OCI-LY7 (cell line): ENCODE measurements at regions of chr17 and their contacts with region 1.

Region 1: GRCh38 chr17:69581061-69581961 is 166.8 kb downstream of the MAP2K6 start:
- DNase-seq: peak; percentile 100
- H3K4me3 ChIP-seq: peak overlapping the region; percentile 47
- H3K27ac ChIP-seq: peak overlapping the region; percentile 94
- H3K4me1 ChIP-seq: peaks cover 93% of the 10 kb centered on the region
- CTCF ChIP-seq: no peak

Region 2: GRCh38 chr17:68512247-68512982 is 1068.9 kb before region 1 on chr17 and contains the start of gene PRKAR1A:
- CTCF ChIA-PET with region 1: no interaction called
- POLR2A ChIA-PET with region 1: no interaction called
- intact Hi-C with region 1: loop called (anchors 5 kb)
- DNase-seq: peak; percentile 98
- H3K4me3 ChIP-seq: peak within 1 kb of the TSS; percentile 90
- H3K27ac ChIP-seq: peak within 1 kb of the TSS; percentile 65
- H3K4me1 ChIP-seq: peaks cover 48% of the 10 kb centered on the region
- CTCF ChIP-seq: no peak
- total RNA-seq, gene PRKAR1A: 158 and 228 TPM in 2 replicates

Region 3: DNA sequence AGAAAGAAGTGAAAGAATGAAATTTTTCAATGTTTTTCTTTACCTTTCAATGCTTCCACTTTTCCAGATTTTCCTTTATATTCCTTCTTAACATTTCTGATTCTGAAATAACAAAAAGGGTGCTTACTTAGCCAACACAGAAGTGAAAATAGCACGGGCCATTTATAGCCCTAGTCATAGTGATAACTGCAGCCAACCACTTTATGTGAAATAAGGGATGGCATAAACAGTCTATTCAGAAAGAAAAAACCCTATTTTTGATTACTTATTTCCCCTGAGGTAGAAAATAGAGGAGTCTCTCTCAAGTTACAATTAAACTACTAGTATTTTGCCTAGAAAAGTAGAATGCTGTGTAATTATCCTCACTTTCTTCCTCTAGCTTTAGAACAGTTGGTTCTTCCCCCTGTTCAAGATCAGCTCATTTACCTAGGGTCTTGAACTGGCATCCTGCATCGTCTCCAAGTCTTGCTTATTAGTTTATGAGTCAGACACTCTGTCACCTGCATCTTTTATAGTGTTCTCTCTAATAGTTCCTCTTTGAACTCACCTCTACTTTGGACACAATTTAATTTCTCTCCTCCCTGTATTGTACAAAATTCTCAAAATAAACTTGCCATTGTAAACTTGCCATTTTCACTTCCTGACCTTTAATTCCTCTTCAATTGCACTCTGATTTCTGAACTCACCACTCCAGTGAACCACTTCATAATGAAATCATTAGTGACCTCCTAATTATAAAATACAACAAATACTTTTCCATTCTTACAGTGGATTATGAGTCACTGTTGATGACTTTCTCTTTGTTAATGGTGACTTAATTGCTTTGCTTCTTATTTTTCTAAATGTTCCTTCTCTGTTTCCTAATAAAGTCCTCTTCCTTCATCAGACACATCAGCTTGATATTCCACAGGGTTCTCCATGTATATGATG is 463.2 kb before region 1 on chr17:
- CTCF ChIA-PET with region 1: no interaction called
- POLR2A ChIA-PET with region 1: no interaction called
- intact Hi-C with region 1: loop called (anchors 5 kb)
- DNase-seq: peak; percentile 85
- H3K4me3 ChIP-seq: peak overlapping the region; percentile 62
- H3K27ac ChIP-seq: peak overlapping the region; percentile 92
- H3K4me1 ChIP-seq: peaks cover 61% of the 10 kb centered on the region
- CTCF ChIP-seq: no peak

Region 4: DNA sequence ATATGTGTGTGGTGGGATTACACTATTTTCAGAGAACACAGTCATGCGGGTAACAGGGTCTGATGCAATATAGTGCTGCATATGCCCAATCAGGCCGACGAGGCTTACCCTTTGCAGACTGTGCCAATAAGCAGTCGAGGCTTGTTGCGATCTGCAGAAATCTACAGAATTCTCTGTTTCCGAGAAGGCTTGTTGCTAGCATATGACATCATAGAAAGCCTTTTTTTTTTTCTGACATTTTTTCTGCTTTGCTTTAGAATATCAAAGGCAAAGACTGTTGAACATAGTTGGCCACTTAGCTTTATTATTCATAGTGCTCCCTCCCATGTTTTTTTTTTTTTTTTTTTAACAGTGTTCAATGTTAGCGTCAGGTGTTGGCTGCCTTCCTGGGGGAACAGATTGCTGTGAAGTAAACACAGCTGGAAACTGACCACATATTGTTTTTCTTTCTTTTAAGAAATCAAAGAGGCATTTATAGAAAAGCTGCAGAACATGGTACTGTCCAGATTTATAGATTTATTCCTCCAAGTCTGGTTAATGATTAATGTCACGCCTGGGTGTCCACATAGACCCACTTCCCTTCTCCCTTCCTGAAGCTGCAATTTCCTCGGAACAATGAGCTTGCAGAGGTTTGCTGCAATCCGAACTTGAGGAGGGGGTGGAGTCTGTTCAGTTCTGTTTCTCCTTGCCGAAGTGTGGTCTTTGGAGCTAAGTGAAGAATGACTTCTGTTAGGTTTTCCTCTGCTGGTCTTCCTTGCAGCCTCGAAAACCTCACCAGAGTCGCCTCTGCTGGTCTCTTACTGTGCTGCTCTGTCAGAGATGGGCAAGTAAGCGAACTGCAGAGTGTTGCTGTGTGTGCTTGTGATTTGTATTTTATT is 79.5 kb before region 1 on chr17:
- CTCF ChIA-PET with region 1: no interaction called
- POLR2A ChIA-PET with region 1: interaction called, 8 read pairs
- intact Hi-C with region 1: loop called (anchors 2 kb)
- DNase-seq: peak; percentile 61
- H3K4me3 ChIP-seq: peak overlapping the region; percentile 50
- H3K27ac ChIP-seq: peak overlapping the region; percentile 67
- H3K4me1 ChIP-seq: peaks cover 55% of the 10 kb centered on the region
- CTCF ChIP-seq: no peak

Region 5: DNA sequence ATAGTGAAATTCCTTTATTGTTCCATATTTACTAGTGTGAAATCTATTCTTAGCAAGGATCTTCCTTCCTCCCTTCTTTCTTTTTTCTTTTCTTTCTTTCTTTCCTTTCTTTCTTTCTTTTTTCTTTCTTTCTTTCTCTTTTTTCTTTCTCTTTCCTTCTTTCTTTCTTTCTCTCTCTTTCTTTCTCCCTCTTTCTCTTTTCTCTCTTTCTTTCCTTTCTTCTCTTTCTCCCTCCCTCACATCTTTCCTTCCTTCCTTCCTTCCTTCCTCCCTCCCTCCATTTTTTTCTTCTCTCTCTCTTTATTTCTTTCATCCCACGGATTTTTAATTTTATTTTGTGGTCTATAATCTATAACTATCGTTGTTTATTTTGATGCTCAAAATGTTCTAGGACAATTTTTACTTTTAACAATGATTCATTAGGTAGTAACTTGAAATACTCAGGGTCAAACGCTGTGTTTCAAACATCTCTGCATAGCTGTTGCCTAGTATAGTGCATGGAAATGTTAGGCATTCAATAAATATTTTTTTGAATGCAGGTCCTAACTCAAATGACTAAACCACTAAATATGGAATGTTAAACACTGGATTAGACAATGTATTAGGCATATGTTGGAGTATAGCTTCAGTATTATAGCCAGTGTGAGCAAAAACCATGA is 11.5 kb after region 1 on chr17:
- CTCF ChIA-PET with region 1: interaction called, 3 read pairs
- POLR2A ChIA-PET with region 1: interaction called, 34 read pairs
- intact Hi-C with region 1: no loop called
- DNase-seq: no peak
- H3K4me3 ChIP-seq: no peak overlapping the region
- H3K27ac ChIP-seq: no peak overlapping the region
- H3K4me1 ChIP-seq: peaks cover 27% of the 10 kb centered on the region
- CTCF ChIP-seq: no peak

Region 6: GRCh38 chr17:69654981-69655855 is 73.9 kb after region 1 on chr17:
- CTCF ChIA-PET with region 1: no interaction called
- POLR2A ChIA-PET with region 1: interaction called, 5 read pairs
- intact Hi-C with region 1: loop called (anchors 2 kb)
- DNase-seq: peak; percentile 84
- H3K4me3 ChIP-seq: no peak overlapping the region
- H3K27ac ChIP-seq: peak overlapping the region; percentile 65
- H3K4me1 ChIP-seq: peaks cover 21% of the 10 kb centered on the region
- CTCF ChIP-seq: no peak